ENCODE measurements at regions of chr12 and their contacts with region 1.

Region 1: GRCh38 chr12:18589316-18589715 is 148.5 kb downstream of the PLCZ1 start:
- DNase-seq: no peak
- H3K4me3 ChIP-seq: no peak overlapping the region
- H3K27ac ChIP-seq: no peak overlapping the region
- H3K4me1 ChIP-seq: no peaks in the 10 kb centered on the region
- H3K27me3 ChIP-seq: no peaks in the 10 kb centered on the region
- CTCF ChIP-seq: no peak
- EP300 ChIP-seq: no peak
- POLR2A ChIP-seq: no peak

Region 2: DNA sequence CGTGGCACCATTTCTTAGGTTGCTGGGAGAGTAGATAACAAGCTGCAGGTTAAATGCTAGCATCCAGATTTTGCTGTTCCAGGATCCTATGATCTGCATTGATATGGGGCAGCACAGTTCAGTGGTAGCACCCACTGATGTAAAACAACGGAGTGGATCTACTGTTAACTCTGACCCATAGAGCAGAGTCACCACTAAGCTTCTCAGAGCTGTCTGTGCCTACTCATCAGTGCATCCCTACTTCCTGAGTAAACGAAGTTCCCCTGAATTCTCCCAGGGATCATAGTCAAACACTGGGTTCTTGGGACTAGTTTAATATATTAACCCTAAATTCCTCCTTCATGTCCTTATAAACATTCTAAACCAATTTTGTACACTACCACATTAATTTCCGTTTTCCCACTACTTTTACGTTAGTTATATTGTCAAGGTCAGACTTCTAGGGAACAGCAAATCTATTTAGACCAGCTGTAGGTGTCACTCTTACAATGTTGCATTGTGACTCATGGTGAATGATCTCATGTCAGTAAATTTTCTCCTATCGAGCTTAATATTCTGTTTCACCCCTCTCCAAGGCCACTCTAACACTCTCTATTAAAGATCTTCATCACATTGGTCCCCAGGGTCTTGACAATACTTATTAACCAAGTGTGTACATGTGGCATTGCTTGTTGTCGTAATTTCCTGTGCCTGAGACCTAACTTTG is 509.6 kb before region 1 on chr12:
- intact Hi-C with region 1: no loop called
- DNase-seq: no peak
- H3K4me3 ChIP-seq: no peak overlapping the region
- H3K27ac ChIP-seq: no peak overlapping the region
- H3K4me1 ChIP-seq: no peaks in the 10 kb centered on the region
- H3K27me3 ChIP-seq: no peaks in the 10 kb centered on the region
- CTCF ChIP-seq: no peak
- EP300 ChIP-seq: no peak
- POLR2A ChIP-seq: no peak

Region 3: DNA sequence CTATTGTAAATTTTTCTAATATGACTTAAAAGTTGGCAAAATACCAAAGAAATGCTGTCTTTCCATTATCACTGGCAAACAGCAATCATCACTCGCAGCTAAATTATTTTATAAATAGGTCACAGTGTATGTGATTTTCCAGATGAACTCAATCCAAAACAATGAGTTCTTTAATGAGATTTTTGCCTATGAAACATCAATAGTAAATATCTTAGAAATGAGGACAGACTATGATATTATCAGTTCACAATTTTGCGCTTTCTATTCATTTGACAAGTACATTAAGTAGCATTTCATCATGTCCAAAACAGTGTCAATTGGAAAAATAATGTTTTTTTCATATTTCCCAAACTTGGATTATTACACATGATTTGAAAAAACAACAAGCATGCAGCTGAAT is 262.3 kb before region 1 on chr12:
- intact Hi-C with region 1: loop called in 1 of 4 experiments (anchors 5 kb)
- DNase-seq: no peak
- H3K4me3 ChIP-seq: no peak overlapping the region
- H3K27ac ChIP-seq: no peak overlapping the region
- H3K4me1 ChIP-seq: no peaks in the 10 kb centered on the region
- H3K27me3 ChIP-seq: no peaks in the 10 kb centered on the region
- CTCF ChIP-seq: no peak
- EP300 ChIP-seq: no peak
- POLR2A ChIP-seq: no peak

Region 4: GRCh38 chr12:18631339-18631738 is 42.0 kb after region 1 on chr12:
- intact Hi-C with region 1: loop called in 1 of 4 experiments (anchors 1 kb)
- DNase-seq: no peak
- H3K4me3 ChIP-seq: no peak overlapping the region
- H3K27ac ChIP-seq: no peak overlapping the region
- H3K4me1 ChIP-seq: no peaks in the 10 kb centered on the region
- H3K27me3 ChIP-seq: no peaks in the 10 kb centered on the region
- CTCF ChIP-seq: no peak
- EP300 ChIP-seq: no peak
- POLR2A ChIP-seq: no peak

Region 5: DNA sequence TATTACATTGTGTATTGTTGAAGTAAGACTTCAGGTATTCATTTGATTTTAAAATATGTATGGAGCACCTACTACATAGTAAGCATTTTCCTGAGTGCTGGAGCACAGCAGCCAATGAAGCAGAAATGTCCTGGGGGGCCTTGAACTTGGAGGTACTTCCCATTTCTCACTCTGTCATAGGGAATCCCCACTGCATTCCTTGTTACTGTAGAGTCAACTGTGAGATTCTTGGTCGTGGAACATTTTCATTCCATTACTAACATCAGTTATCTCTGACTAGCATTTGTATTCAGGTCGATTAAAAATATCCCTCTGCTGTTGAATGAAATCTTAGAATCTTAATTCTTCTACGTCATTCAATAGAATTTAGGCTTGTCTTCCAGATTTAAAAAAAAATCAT is 1845.7 kb after region 1 on chr12:
- intact Hi-C with region 1: loop called in 1 of 4 experiments (anchors 5 kb)
- DNase-seq: no peak
- H3K4me3 ChIP-seq: no peak overlapping the region
- H3K27ac ChIP-seq: no peak overlapping the region
- H3K4me1 ChIP-seq: peaks cover 2% of the 10 kb centered on the region
- H3K27me3 ChIP-seq: no peaks in the 10 kb centered on the region
- CTCF ChIP-seq: no peak
- EP300 ChIP-seq: no peak
- POLR2A ChIP-seq: no peak

Measured in ovary (tissue), 10 donors.